ENCODE measurements at regions of chr17 and their contacts with region 1.

Region 1: GRCh38 chr17:40531051-40531991 is 29.9 kb upstream of the TNS4 start:
- DNase-seq: peak in 7 of 9 experiments; percentile 49 to 89 (median 74)
- ATAC-seq: peak; percentile 8
- H3K4me3 ChIP-seq: no peak overlapping the region
- H3K4me3 Mint-ChIP-seq: peak overlapping the region; percentile 30
- H3K27ac ChIP-seq: no peak overlapping the region
- H3K27ac Mint-ChIP-seq: peak overlapping the region; percentile 78
- H3K4me1 ChIP-seq: peaks cover 70% of the 10 kb centered on the region
- H3K4me1 Mint-ChIP-seq: peaks cover 76% of the 10 kb centered on the region
- H3K27me3 ChIP-seq: no peaks in the 10 kb centered on the region
- H3K27me3 Mint-ChIP-seq: no peaks in the 10 kb centered on the region
- CTCF ChIP-seq: no peak

Region 2: GRCh38 chr17:40191237-40192208 is 339.8 kb before region 1 on chr17:
- CTCF ChIA-PET with region 1: no interaction called
- POLR2A ChIA-PET with region 1: no interaction called
- intact Hi-C with region 1: no loop called
- DNase-seq: peak; percentile 36 to 80 (median 67)
- ATAC-seq: peak; percentile 73
- H3K4me3 ChIP-seq: peak overlapping the region; percentile 51 to 55
- H3K4me3 Mint-ChIP-seq: peak overlapping the region; percentile 95
- H3K27ac ChIP-seq: no peak overlapping the region
- H3K27ac Mint-ChIP-seq: peak overlapping the region; percentile 41
- H3K4me1 ChIP-seq: no peaks in the 10 kb centered on the region
- H3K4me1 Mint-ChIP-seq: peaks cover 9% of the 10 kb centered on the region
- H3K27me3 ChIP-seq: no peaks in the 10 kb centered on the region
- H3K27me3 Mint-ChIP-seq: no peaks in the 10 kb centered on the region
- CTCF ChIP-seq: peak; percentile 49

Region 3: GRCh38 chr17:40303009-40303657 is 228.2 kb before region 1 on chr17:
- CTCF ChIA-PET with region 1: interaction called, 16 read pairs
- POLR2A ChIA-PET with region 1: no interaction called
- intact Hi-C with region 1: loop called (anchors 2 to 5 kb)
- DNase-seq: peak in 5 of 9 experiments; percentile 41 to 83 (median 66)
- ATAC-seq: peak; percentile 69
- H3K4me3 ChIP-seq: no peak overlapping the region
- H3K4me3 Mint-ChIP-seq: no peak overlapping the region
- H3K27ac ChIP-seq: no peak overlapping the region
- H3K27ac Mint-ChIP-seq: no peak overlapping the region
- H3K4me1 ChIP-seq: peaks cover 35% of the 10 kb centered on the region
- H3K4me1 Mint-ChIP-seq: peaks cover 12% of the 10 kb centered on the region
- H3K27me3 ChIP-seq: no peaks in the 10 kb centered on the region
- H3K27me3 Mint-ChIP-seq: no peaks in the 10 kb centered on the region
- CTCF ChIP-seq: peak; percentile 85

Region 4: DNA sequence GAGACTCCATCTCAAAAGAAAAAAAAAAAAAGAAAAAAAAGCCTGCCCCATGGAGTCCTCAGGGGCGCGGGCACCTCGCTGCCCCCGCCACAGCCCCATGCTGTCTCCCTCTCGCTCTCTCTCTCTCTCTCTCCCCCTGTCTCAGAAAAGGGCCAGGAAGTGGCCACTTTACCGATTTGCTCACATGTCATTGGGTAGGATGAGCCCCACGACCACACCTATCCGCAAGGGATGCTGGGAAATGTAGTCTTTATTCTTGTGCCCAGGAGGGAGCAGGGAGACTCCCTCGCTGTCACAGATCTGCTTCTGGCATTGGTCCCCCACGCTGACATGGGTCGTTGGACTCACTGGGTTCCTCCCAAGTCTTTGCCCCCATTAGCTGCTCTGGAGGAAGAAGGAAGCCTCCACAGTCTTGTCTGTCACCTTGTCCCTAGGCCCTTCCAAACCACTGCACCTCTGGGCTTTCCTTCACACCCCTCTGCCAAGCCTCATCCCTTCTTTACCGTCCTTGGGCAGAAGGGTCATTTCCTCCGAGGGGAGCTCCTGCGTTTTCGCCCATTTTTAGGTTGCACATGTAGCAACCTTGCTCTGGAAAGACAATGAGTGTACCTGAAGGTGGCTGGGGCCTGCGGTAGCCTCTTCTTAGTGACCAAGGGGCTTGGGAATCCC is 159.9 kb before region 1 on chr17:
- CTCF ChIA-PET with region 1: interaction called, 10 read pairs
- POLR2A ChIA-PET with region 1: no interaction called
- intact Hi-C with region 1: no loop called
- DNase-seq: peak in 2 of 9 experiments; percentile 60 to 73
- ATAC-seq: peak; percentile 83
- H3K4me3 ChIP-seq: no peak overlapping the region
- H3K4me3 Mint-ChIP-seq: no peak overlapping the region
- H3K27ac ChIP-seq: no peak overlapping the region
- H3K27ac Mint-ChIP-seq: no peak overlapping the region
- H3K4me1 ChIP-seq: no peaks in the 10 kb centered on the region
- H3K4me1 Mint-ChIP-seq: peaks cover 2% of the 10 kb centered on the region
- H3K27me3 ChIP-seq: no peaks in the 10 kb centered on the region
- H3K27me3 Mint-ChIP-seq: no peaks in the 10 kb centered on the region
- CTCF ChIP-seq: no peak

Region 5: DNA sequence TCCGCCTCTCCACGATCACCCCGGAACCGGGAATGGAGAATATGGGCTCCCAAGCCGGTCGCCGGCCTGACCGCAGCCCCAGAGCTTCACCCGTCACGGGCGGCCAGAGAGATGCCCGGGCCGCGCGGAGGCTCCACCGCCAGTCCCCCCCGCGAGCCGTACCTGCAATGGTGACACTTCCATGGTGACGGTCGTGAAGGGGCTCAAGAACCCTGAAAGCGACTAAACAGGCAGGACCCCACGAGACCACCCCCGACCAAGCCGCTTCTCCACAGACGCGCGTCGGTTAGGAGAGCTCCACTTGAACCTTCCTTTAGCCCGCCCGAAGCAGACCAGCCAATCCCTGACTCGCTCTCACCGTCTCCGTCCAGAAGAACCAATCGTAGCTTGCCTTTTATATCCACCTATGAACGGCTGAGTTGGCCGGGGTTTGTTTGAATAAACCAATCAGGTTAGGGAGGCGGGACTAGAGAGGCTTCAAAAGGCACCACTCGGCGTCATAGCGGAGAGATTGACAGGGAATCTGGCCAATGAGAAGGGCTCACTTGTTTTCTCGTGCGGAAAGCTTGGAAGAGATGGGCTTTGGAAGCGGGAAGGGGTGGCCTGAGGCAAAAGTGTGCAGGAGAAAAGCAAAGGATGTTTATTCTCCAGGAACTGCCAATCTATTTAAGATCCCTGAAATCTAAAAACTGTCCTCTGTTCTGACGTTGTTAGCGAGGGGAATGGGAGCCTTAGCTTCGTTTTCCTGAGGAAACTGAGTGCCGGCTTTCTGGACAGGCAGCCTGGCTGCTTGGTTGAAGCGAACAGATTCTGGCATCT is 113.5 kb before region 1 on chr17 and contains the start of gene TOP2A:
- CTCF ChIA-PET with region 1: interaction called, 62 read pairs
- POLR2A ChIA-PET with region 1: interaction called, 17 read pairs
- intact Hi-C with region 1: loop called (anchors 1 kb)
- DNase-seq: peak; percentile 90 to 99 (median 95)
- ATAC-seq: peak; percentile 99
- H3K4me3 ChIP-seq: peak within 1 kb of the TSS; percentile 75
- H3K4me3 Mint-ChIP-seq: peak within 1 kb of the TSS; percentile 92
- H3K27ac ChIP-seq: peak within 1 kb of the TSS; percentile 42 to 49
- H3K27ac Mint-ChIP-seq: peak within 1 kb of the TSS; percentile 91
- H3K4me1 ChIP-seq: peaks cover 6% of the 10 kb centered on the region
- H3K4me1 Mint-ChIP-seq: peaks cover 17% of the 10 kb centered on the region
- H3K27me3 ChIP-seq: no peaks in the 10 kb centered on the region
- H3K27me3 Mint-ChIP-seq: peaks cover 3% of the 10 kb centered on the region
- CTCF ChIP-seq: no peak
- total RNA-seq, gene TOP2A: 2.9 TPM

Region 6: DNA sequence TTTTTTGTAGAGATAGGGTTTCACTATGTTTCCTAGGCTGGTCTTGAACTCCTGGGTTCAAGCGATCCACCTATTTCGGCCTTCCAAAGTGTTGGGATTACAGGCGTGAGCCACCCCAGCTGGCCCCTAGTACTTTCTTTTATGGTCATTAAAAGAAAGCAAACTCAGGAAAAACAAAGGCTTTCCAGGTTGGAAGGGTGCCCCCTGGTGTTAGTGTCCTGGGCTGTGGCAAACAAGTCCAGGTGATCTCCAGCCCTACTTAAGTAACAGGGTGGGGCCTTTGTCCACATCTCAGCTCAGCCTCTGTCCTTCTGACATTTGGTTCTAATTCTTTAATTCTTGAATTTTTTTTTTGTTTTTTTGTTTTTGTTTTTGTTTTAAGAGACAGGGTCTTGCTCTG is 81.1 kb before region 1 on chr17:
- CTCF ChIA-PET with region 1: interaction called, 51 read pairs
- POLR2A ChIA-PET with region 1: interaction called, 3 read pairs
- intact Hi-C with region 1: no loop called
- DNase-seq: peak in 7 of 9 experiments; percentile 19 to 58 (median 48)
- ATAC-seq: no peak
- H3K4me3 ChIP-seq: no peak overlapping the region
- H3K4me3 Mint-ChIP-seq: no peak overlapping the region
- H3K27ac ChIP-seq: no peak overlapping the region
- H3K27ac Mint-ChIP-seq: no peak overlapping the region
- H3K4me1 ChIP-seq: peaks cover 8% of the 10 kb centered on the region
- H3K4me1 Mint-ChIP-seq: peaks cover 16% of the 10 kb centered on the region
- H3K27me3 ChIP-seq: no peaks in the 10 kb centered on the region
- H3K27me3 Mint-ChIP-seq: peaks cover 3% of the 10 kb centered on the region
- CTCF ChIP-seq: peak; percentile 28

Region 7: DNA sequence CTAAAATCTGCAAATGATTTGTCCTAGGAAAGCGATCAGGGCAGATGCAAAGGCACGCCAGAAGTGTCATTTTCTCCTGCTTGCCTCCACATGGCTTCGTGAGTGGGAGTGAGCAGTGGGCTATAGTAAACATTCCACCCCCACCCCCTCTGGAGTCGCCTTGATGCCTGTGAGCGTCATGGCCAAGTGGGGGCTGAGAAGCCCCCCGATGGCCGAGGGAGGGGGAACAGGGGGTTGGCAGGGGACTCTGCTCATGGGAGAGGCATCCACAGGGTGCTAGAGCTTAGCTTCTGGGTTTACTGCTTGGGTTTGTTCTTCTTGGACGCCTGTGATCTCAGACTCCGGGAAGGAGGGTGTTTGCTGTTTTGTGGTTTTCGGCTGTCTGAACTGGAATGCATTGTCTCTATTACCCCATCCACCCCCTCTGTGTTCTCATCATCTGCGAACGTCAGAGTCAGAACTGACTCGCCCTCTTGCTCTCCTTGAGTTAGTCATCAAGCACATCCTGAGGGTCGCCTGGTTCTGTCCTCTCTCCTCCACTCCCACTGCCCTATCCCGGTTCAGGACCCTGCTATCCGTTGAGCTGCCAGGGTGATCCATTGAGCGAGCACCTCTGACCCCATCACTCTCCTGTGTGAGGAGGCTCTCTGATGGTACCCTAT is 45.3 kb before region 1 on chr17:
- CTCF ChIA-PET with region 1: interaction called, 27 read pairs
- POLR2A ChIA-PET with region 1: interaction called, 10 read pairs
- intact Hi-C with region 1: no loop called
- DNase-seq: peak in 2 of 9 experiments; percentile 33 to 45
- ATAC-seq: peak; percentile 58
- H3K4me3 ChIP-seq: no peak overlapping the region
- H3K4me3 Mint-ChIP-seq: no peak overlapping the region
- H3K27ac ChIP-seq: no peak overlapping the region
- H3K27ac Mint-ChIP-seq: no peak overlapping the region
- H3K4me1 ChIP-seq: peaks cover 33% of the 10 kb centered on the region
- H3K4me1 Mint-ChIP-seq: peaks cover 57% of the 10 kb centered on the region
- H3K27me3 ChIP-seq: no peaks in the 10 kb centered on the region
- H3K27me3 Mint-ChIP-seq: no peaks in the 10 kb centered on the region
- CTCF ChIP-seq: no peak

Region 8: GRCh38 chr17:40559954-40560591 is 28.8 kb after region 1 on chr17:
- CTCF ChIA-PET with region 1: interaction called, 470 read pairs
- POLR2A ChIA-PET with region 1: interaction called, 755 read pairs
- intact Hi-C with region 1: loop called (anchors 1 kb)
- DNase-seq: peak; percentile 69 to 90 (median 84)
- ATAC-seq: peak; percentile 24
- H3K4me3 ChIP-seq: peak overlapping the region; percentile 71
- H3K4me3 Mint-ChIP-seq: peak overlapping the region; percentile 86
- H3K27ac ChIP-seq: peak overlapping the region; percentile 74 to 96
- H3K27ac Mint-ChIP-seq: peak overlapping the region; percentile 94
- H3K4me1 ChIP-seq: peaks cover 55% of the 10 kb centered on the region
- H3K4me1 Mint-ChIP-seq: peaks cover 90% of the 10 kb centered on the region
- H3K27me3 ChIP-seq: no peaks in the 10 kb centered on the region
- H3K27me3 Mint-ChIP-seq: no peaks in the 10 kb centered on the region
- CTCF ChIP-seq: peak; percentile 97

Region 9: DNA sequence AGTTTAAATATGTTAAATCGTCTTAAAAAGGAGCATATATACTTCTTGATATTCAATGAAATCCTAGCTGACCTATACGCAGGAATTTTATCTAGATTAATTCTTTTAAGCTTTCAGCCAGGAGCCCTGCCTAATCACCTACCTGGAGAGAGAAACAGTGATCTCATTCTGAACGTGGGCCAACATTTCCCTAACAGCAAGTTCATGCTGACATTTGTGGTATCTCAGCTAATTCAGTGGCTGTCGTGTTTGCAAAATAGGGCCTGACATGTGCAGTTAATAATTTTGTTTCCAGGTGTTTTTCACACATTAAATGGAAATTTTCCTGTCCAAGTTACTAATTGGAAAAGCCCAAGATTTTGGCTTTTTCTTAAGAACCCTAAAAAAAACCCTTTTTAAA is 154.9 kb after region 1 on chr17:
- CTCF ChIA-PET with region 1: no interaction called
- POLR2A ChIA-PET with region 1: no interaction called
- intact Hi-C with region 1: no loop called
- DNase-seq: no peak
- ATAC-seq: no peak
- H3K4me3 ChIP-seq: no peak overlapping the region
- H3K4me3 Mint-ChIP-seq: no peak overlapping the region
- H3K27ac ChIP-seq: no peak overlapping the region
- H3K27ac Mint-ChIP-seq: no peak overlapping the region
- H3K4me1 ChIP-seq: no peaks in the 10 kb centered on the region
- H3K4me1 Mint-ChIP-seq: no peaks in the 10 kb centered on the region
- H3K27me3 ChIP-seq: no peaks in the 10 kb centered on the region
- H3K27me3 Mint-ChIP-seq: peaks cover 17% of the 10 kb centered on the region
- CTCF ChIP-seq: no peak